GM10248 (cell line): ENCODE measurements at regions of chr18 and their contacts with region 1.

Region 1: GRCh38 chr18:72652990-72653593 is 109.0 kb upstream of the CBLN2 start:
- DNase-seq: peak; percentile 48
- CTCF ChIP-seq: peak; percentile 63

Region 2: GRCh38 chr18:72637299-72637698 is 15.8 kb before region 1 on chr18:
- CTCF ChIA-PET with region 1: interaction called, 17 read pairs
- POLR2A ChIA-PET with region 1: no interaction called
- DNase-seq: no peak
- CTCF ChIP-seq: no peak